Activated B cell treated with CpG ODN at 0.5 μM for 24 hours (primary cell): ENCODE measurements at regions of chr19 and their contacts with region 1.

Region 1: GRCh38 chr19:6021878-6022569 is 44.1 kb upstream of the RANBP3 start:
- DNase-seq: peak; percentile 50
- ATAC-seq: peak; percentile 97
- H3K4me3 Mint-ChIP-seq: no peak overlapping the region
- H3K27ac Mint-ChIP-seq: no peak overlapping the region
- H3K4me1 Mint-ChIP-seq: no peaks in the 10 kb centered on the region
- H3K27me3 Mint-ChIP-seq: peaks cover 3% of the 10 kb centered on the region
- CTCF ChIP-seq: peak; percentile 25

Region 2: DNA sequence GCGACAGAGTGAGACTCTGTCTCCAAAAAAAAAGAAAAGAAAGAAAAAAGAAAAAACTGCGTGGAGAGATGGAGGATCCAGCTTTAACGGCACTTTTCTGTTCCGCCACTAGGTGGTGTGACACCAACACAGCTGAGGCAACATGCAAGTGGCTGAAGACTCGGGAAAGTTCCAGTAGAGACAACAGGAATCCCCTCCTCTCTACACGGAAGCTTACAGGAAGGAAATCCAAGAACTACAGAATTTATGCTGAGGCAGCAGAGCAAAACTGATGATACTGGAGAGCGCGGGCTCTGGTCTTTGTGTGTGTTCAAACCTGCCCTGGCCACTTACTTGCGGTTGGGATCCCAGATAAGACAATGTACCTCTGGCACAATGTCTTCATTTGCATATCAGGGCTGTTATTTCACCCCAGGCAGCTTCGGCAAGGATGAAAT is 54.0 kb before region 1 on chr19:
- CTCF ChIA-PET with region 1: interaction called, 23 read pairs
- POLR2A ChIA-PET with region 1: no interaction called
- intact Hi-C with region 1: loop called (anchors 1 kb)
- DNase-seq: no peak
- ATAC-seq: peak; percentile 72
- H3K4me3 Mint-ChIP-seq: peak overlapping the region; percentile 50
- H3K27ac Mint-ChIP-seq: peak overlapping the region; percentile 73
- H3K4me1 Mint-ChIP-seq: peaks cover 78% of the 10 kb centered on the region
- H3K27me3 Mint-ChIP-seq: no peaks in the 10 kb centered on the region
- CTCF ChIP-seq: peak; percentile 28

Region 3: GRCh38 chr19:6006896-6007295 is 15.1 kb before region 1 on chr19:
- CTCF ChIA-PET with region 1: no interaction called
- POLR2A ChIA-PET with region 1: no interaction called
- intact Hi-C with region 1: no loop called
- DNase-seq: no peak
- ATAC-seq: no peak
- H3K4me3 Mint-ChIP-seq: no peak overlapping the region
- H3K27ac Mint-ChIP-seq: no peak overlapping the region
- H3K4me1 Mint-ChIP-seq: no peaks in the 10 kb centered on the region
- H3K27me3 Mint-ChIP-seq: no peaks in the 10 kb centered on the region
- CTCF ChIP-seq: no peak